ENCODE measurements at regions of chr1 and their contacts with region 1.

Region 1: GRCh38 chr1:98325646-98326441 is 335.7 kb upstream of the SNX7 start:
- DNase-seq: peak; percentile 77
- H3K4me3 ChIP-seq: no peak overlapping the region
- CTCF ChIP-seq: no peak

Region 2: DNA sequence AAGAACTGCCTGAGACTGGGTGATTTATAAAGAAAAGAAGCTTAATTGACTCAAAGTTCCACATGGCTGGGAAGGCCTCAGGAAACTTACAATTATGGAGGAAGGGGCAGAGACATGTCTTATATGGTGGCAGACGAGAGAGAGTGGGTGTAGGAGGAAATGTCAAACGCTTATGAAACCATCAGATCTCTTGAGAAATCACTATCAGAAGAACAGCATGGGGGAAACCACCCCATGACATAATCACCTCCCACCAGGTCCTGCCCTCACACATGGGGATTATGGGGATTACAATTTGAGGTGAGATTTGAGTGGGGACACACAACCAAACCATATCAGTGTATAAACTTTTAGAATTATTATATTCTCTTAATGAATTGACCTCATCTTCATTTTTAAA is 69.1 kb before region 1 on chr1:
- in situ Hi-C with region 1: no loop called
- DNase-seq: no peak
- H3K4me3 ChIP-seq: no peak overlapping the region
- CTCF ChIP-seq: no peak

Region 3: GRCh38 chr1:98468111-98468717 is 142.4 kb after region 1 on chr1:
- in situ Hi-C with region 1: loop called (anchors 25 kb)
- DNase-seq: peak; percentile 64
- H3K4me3 ChIP-seq: no peak overlapping the region
- CTCF ChIP-seq: peak; percentile 70